Sciatic nerve (tissue), 2 donors: ENCODE measurements at regions of chr6 and their contacts with region 1.

Region 1: GRCh38 chr6:168120390-168121302 is 41.6 kb upstream of the FRMD1 start:
- DNase-seq: no peak
- ATAC-seq: no peak

Region 2: DNA sequence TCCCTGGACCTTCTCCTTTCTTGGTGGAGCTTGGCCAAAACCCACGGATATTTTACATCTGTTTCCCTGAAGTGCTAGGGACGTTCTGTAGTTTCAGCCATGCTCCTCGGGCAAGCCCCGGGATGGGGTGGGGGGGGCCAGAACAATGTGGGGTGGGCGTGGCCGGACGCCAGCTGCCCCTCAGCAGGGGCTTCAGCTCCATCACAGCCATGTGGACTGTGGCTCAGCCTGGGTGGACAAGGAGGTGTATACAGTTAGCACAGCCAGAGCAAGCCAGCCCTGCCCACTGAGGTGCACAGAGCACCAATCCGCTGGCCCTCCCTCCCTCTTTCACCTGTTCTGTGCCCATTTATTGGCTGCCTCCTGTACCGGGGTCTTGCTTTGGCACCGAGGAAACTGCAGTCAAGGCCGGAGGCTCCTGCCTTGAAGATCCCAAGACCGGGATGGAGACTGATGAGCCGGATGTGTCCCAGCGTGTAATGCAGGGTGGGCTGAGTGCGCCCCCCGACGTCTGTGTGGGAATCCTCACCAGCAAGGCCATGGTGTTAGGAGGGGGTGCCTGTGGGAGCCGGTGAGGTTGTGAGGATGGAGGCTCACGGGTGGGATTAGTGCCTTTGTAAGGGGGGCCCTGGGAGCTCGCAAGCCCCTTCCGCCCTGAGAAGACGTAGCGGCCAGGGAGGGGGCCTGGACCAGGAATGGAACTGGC is 69.6 kb before region 1 on chr6:
- intact Hi-C with region 1: loop called (anchors 10 kb)
- DNase-seq: no peak
- ATAC-seq: peak; percentile 51